H1 (cell line): ENCODE measurements at regions of chr22 and their contacts with region 1.

Region 1: GRCh38 chr22:27032091-27032761 is 374.8 kb downstream of the MIAT start:
- DNase-seq: peak; percentile 33 to 81
- H3K4me3 ChIP-seq: no peak overlapping the region
- H3K27ac ChIP-seq: no peak overlapping the region
- H3K4me1 ChIP-seq: peaks cover 0 to 5% (median 4%) of the 10 kb centered on the region in 4 experiments; a peak in 6 of 7 replicates
- H3K27me3 ChIP-seq: no peaks in the 10 kb centered on the region; a peak in 1 of 7 replicates
- CTCF ChIP-seq: peak; percentile 61 to 89 (median 87)
- EP300 ChIP-seq: no peak
- POLR2A ChIP-seq: no peak
- RAD21 ChIP-seq: peak; percentile 66 to 74

Region 2: DNA sequence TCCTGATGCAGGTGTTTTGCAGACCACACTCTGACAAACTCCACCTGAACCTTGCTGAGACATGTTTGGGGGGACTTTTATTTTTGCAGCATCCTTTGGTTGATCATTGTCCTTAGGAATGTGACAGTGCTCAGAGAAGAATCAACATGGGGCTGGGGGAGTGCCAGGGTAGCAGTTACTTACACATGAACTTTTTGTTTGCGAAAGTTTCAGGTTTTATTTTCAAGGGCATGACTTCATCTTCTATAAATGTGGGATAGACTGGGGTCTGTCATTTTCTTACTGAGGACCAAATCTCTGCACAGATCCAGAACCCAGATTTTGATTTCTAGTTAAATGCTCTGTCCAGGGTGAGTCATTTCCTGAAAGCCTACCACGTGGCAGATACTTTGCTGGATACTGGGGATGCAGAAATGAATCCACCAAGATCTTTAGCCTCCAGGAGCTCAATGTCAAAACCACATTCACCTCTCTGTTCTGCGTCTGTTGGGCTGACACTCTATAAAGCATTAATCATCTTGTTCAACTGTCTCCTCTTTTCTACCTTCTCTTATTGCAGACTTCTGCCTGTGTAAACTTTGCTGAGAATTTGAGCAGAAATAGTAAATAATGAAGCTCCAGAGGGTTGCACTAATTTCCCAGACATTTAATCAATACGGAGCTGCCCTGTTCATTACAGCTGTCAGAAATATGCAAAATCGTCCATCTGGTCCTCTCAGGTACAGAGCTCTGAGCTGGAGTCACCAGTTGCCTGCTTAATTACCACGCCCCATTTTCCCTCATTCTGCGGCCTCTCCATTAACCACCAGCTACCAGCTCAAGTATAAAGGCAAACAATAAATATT is 13.1 kb after region 1 on chr22:
- CTCF ChIA-PET with region 1: interaction called, 10 read pairs
- POLR2A ChIA-PET with region 1: interaction called, 3 read pairs
- DNase-seq: no peak
- H3K4me3 ChIP-seq: no peak overlapping the region
- H3K27ac ChIP-seq: no peak overlapping the region
- H3K4me1 ChIP-seq: no peaks in the 10 kb centered on the region; a peak in 1 of 7 replicates
- H3K27me3 ChIP-seq: no peaks in the 10 kb centered on the region
- CTCF ChIP-seq: no peak
- EP300 ChIP-seq: no peak
- POLR2A ChIP-seq: no peak
- RAD21 ChIP-seq: no peak

Region 3: DNA sequence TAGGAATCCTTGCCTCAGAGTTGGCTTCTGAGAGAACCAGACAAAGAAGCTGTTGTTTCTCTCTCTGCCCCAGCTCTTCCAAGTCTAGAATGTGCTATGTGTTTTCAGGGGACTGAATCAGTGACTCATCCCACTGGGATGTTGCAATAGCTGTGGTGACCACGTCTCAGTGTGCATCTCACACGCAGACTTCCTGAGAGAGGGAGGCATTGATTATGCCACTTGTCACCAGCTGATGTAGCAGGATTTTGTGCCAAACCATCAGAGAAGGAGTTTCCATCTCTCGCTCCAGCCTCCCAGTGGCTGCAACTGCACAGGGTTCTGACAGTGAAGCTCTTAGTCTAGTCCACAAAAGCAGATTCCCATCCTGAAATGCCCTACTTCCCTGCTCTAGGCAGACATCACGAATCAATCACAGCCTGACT is 81.0 kb after region 1 on chr22:
- CTCF ChIA-PET with region 1: no interaction called
- POLR2A ChIA-PET with region 1: no interaction called
- DNase-seq: no peak
- H3K4me3 ChIP-seq: no peak overlapping the region
- H3K27ac ChIP-seq: no peak overlapping the region
- H3K4me1 ChIP-seq: peaks cover 0 to 5% (median 0%) of the 10 kb centered on the region in 4 experiments; a peak in 3 of 7 replicates
- H3K27me3 ChIP-seq: no peaks in the 10 kb centered on the region
- CTCF ChIP-seq: no peak
- EP300 ChIP-seq: no peak
- POLR2A ChIP-seq: no peak
- RAD21 ChIP-seq: no peak